Activated CD8-positive, alpha-beta memory T cell treated with anti-CD3 and anti-CD28 coated beads, Interleukin-2, amount 10 ng/mL, durations not matched to agents 7 days and 5 days (primary cell): ENCODE measurements at regions of chr3 and their contacts with region 1.

Region 1: GRCh38 chr3:114290911-114291901 is 2.6 kb upstream of the TIGIT start:
- DNase-seq: peak; percentile 98
- ATAC-seq: peak; percentile 74
- H3K4me3 Mint-ChIP-seq: peak overlapping the region; percentile 79
- H3K27ac Mint-ChIP-seq: peak overlapping the region; percentile 99
- H3K4me1 Mint-ChIP-seq: peaks cover 60% of the 10 kb centered on the region
- H3K27me3 Mint-ChIP-seq: no peaks in the 10 kb centered on the region

Region 2: DNA sequence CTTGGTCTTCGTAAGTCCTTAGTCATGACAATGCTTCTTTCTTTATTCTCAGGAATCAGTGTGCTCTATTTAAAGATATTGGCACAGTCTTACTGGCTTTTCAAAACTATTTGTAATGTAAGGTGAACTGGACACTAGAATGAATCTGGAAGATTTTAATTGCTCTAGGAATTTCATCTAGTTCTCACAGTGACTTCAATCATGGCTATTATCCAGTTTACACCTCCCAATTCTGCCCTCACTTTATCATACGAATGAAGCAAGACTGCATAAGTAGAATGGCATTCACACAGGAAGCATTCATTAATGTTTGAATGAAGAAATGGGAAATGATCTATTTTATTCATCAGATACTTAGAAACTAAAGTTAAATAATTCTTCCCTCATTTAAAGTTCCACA is 85.7 kb before region 1 on chr3:
- CTCF ChIA-PET with region 1: interaction called, 11 read pairs
- DNase-seq: no peak
- ATAC-seq: no peak
- H3K4me3 Mint-ChIP-seq: no peak overlapping the region
- H3K27ac Mint-ChIP-seq: no peak overlapping the region
- H3K4me1 Mint-ChIP-seq: peaks cover 10% of the 10 kb centered on the region
- H3K27me3 Mint-ChIP-seq: no peaks in the 10 kb centered on the region

Region 3: DNA sequence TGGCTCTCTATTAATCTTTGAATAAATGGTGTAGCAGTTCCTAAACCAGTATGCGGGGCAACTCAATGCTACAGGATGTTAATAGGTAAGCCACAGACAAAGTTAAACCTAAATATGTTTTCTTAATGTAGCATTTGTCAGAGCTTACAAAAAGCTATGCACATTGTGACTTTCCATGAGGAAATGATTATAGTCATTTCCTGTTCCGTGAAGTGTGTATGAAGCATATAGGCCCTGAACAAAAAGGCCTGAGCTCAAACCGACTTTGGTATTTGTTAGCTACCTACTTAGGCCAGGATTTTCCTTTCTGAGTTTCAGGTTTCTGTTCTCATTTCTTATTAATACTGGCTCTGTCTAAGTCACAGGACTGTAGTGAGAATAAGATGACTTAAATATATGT is 68.1 kb before region 1 on chr3:
- CTCF ChIA-PET with region 1: interaction called, 152 read pairs
- DNase-seq: peak; percentile 56
- ATAC-seq: peak; percentile 52
- H3K4me3 Mint-ChIP-seq: peak overlapping the region; percentile 3
- H3K27ac Mint-ChIP-seq: peak overlapping the region; percentile 98
- H3K4me1 Mint-ChIP-seq: peaks cover 89% of the 10 kb centered on the region
- H3K27me3 Mint-ChIP-seq: no peaks in the 10 kb centered on the region

Region 4: DNA sequence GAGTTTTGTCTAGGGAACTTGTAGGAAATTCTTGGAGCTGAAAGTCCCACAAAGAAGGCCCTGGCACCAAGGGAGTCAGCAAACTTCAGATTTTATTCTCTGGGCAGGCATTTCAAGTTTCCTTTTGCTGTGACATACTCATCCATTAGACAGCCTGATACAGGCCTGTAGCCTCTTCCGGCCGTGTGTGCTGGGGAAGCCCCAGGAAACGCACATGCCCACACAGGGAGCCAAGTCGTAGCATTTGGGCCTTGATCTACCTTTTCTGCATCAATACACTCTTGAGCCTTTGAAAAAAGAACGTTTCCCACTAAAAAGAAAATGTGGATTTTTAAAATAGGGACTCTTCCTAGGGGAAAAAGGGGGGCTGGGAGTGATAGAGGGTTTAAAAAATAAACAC is 17.6 kb after region 1 on chr3:
- CTCF ChIA-PET with region 1: interaction called, 156 read pairs
- DNase-seq: peak; percentile 84
- ATAC-seq: peak; percentile 87
- H3K4me3 Mint-ChIP-seq: peak overlapping the region; percentile 54
- H3K27ac Mint-ChIP-seq: peak overlapping the region; percentile 95
- H3K4me1 Mint-ChIP-seq: peaks cover 82% of the 10 kb centered on the region
- H3K27me3 Mint-ChIP-seq: no peaks in the 10 kb centered on the region

Region 5: GRCh38 chr3:114336122-114336697 is 45.0 kb after region 1 on chr3:
- CTCF ChIA-PET with region 1: interaction called, 22 read pairs
- DNase-seq: no peak
- ATAC-seq: no peak
- H3K4me3 Mint-ChIP-seq: no peak overlapping the region
- H3K27ac Mint-ChIP-seq: peak overlapping the region; percentile 38
- H3K4me1 Mint-ChIP-seq: peaks cover 77% of the 10 kb centered on the region
- H3K27me3 Mint-ChIP-seq: no peaks in the 10 kb centered on the region